ENCODE measurements at regions of chr3 and their contacts with region 1.

Region 1: DNA sequence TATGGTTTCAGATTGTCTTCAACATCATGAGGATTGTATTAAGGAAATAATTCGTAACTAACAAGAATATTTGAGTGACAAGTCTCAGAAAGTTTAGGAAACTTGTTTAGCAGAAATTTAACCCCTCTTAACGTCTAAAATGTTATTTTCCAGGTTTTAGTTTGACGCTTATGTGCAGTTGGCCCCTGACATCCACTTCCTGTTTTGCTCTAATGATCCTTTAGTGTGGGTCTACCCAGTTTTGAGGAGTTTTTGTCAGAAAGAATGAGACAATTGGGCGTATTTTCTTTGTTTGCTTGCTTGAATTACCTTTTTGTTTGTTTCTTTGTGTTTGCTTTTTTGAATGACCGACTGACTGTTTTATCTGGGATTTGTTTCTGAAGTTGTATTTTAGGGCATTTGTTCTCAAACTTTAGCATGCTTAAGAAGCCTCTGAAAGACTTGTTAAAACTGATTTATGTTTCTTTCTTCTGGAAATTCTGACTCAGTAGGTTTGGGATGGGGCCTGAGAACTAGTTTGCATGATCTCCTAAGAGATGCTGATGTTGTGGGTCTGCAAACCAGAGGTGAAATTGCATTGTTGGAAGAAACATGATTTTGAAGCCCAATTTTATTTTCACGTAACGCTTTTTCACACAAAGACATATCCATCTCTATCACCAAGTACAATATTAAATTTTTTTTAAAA is 20.6 kb downstream of the RBMS3 start:
- DNase-seq: no peak
- ATAC-seq: no peak
- H3K4me3 ChIP-seq: no peak overlapping the region
- H3K27ac ChIP-seq: no peak overlapping the region
- H3K4me1 ChIP-seq: no peaks in the 10 kb centered on the region
- H3K27me3 ChIP-seq: no peaks in the 10 kb centered on the region
- CTCF ChIP-seq: no peak

Region 2: DNA sequence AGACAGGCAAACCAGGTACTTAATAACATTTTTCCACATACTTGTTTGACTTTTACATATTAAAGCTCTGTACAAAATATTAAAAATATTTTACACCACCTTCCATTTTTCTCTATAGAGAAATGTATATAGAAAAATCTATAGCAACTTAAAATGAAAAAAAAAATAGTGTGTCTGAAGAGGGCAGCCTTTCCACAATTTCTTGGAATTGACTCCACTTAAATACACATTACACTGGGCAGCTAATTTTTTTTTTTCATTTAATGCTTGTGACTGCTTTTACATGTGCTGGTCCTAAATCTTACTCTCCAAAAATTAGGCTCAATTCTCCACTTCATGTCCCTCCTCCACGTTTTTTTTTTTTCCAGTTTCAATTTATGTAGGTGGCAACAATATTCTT is 447.6 kb before region 1 on chr3:
- CTCF ChIA-PET with region 1: no interaction called
- POLR2A ChIA-PET with region 1: no interaction called
- intact Hi-C with region 1: no loop called
- DNase-seq: peak; percentile 46
- ATAC-seq: peak; percentile 67
- H3K4me3 ChIP-seq: no peak overlapping the region
- H3K27ac ChIP-seq: no peak overlapping the region
- H3K4me1 ChIP-seq: peaks cover 5% of the 10 kb centered on the region; the same call in 1 of the 2 replicates
- H3K27me3 ChIP-seq: no peaks in the 10 kb centered on the region
- CTCF ChIP-seq: peak; percentile 58

Region 3: GRCh38 chr3:29226706-29227105 is 74.8 kb before region 1 on chr3:
- CTCF ChIA-PET with region 1: no interaction called
- POLR2A ChIA-PET with region 1: no interaction called
- intact Hi-C with region 1: no loop called
- DNase-seq: no peak
- ATAC-seq: no peak
- H3K4me3 ChIP-seq: no peak overlapping the region
- H3K27ac ChIP-seq: no peak overlapping the region
- H3K4me1 ChIP-seq: no peaks in the 10 kb centered on the region
- H3K27me3 ChIP-seq: no peaks in the 10 kb centered on the region
- CTCF ChIP-seq: no peak

Region 4: DNA sequence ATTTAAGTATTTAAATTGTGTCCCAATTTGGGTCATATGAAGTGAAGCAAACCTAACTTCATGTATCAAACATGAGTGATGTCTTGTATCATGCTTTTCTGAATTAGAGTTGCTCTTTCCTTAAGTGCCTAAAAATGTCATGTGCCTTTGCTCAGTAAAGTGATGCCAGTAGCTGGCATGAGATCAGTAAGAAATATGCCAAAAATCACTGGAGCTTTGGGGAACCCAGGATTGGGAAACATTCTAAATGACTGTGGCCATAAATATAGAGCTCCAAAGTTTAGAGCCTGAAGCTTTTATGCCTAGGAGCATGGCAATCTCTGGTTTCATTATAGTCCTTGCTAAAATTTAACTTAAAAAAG is 13.2 kb after region 1 on chr3:
- CTCF ChIA-PET with region 1: no interaction called
- POLR2A ChIA-PET with region 1: no interaction called
- intact Hi-C with region 1: loop called (anchors 2 kb)
- DNase-seq: no peak
- ATAC-seq: no peak
- H3K4me3 ChIP-seq: no peak overlapping the region
- H3K27ac ChIP-seq: no peak overlapping the region
- H3K4me1 ChIP-seq: no peaks in the 10 kb centered on the region
- H3K27me3 ChIP-seq: no peaks in the 10 kb centered on the region
- CTCF ChIP-seq: no peak

Region 5: DNA sequence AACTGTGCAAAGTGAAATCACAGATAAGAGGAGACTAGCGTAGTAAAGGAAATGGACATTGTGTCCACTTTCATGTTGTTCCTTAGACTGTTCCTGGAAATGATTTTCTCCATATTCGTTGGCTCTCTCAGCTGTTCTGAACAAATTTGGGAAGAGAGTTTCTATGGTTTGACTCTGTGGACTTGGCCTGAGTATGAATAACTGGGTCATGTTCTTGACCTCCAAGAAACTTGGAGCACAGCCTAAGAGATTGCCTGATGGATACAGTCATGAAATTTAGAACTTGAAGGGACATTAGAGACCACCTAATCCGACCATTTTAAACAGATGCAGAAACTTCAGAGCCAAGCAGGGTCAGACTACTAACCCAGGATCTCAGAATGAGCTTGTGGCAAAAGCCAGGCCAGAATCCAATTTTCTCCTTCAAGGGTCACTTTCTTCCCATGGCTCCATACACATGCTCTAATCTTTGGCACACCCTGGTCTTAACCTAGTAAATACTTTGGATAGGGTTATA is 409.8 kb after region 1 on chr3:
- CTCF ChIA-PET with region 1: no interaction called
- POLR2A ChIA-PET with region 1: no interaction called
- intact Hi-C with region 1: no loop called
- DNase-seq: no peak
- ATAC-seq: no peak
- H3K4me3 ChIP-seq: no peak overlapping the region
- H3K27ac ChIP-seq: no peak overlapping the region
- H3K4me1 ChIP-seq: no peaks in the 10 kb centered on the region
- H3K27me3 ChIP-seq: no peaks in the 10 kb centered on the region
- CTCF ChIP-seq: no peak

Measured in PC-3 (cell line).